Lower leg skin (tissue), 4 donors: ENCODE measurements at regions of chr5 and their contacts with region 1.

Region 1: DNA sequence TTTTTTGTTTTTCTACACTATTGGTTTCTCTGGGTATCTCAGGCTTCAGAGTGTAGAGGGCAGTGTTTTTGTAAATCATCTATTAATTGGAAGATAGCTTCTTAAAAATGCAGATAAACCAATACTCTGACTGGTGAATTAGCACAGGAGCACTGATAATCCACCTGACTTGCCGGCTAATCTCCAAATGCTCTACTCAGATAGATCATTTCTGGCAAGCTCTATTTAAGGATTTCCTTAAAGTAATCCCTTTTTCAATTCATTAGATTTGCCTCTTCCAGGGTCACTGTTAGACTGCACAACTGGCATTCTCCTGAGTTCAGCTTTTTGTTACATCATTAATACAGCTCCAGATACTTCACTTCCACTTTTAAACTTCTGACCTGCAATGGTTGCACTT is 1390.3 kb upstream of the NUDT12 start:
- DNase-seq: no peak
- H3K4me3 ChIP-seq: no peak overlapping the region
- CTCF ChIP-seq: no peak
- POLR2A ChIP-seq: no peak

Region 2: GRCh38 chr5:104965006-104965405 is 12.1 kb after region 1 on chr5:
- intact Hi-C with region 1: loop called (anchors 1 kb)
- DNase-seq: no peak
- H3K4me3 ChIP-seq: no peak overlapping the region
- CTCF ChIP-seq: no peak
- POLR2A ChIP-seq: no peak